Transverse colon (tissue), 4 donors: ENCODE measurements at regions of chr2 and their contacts with region 1.

Region 1: GRCh38 chr2:9333591-9334171 is 89.6 kb downstream of the ITGB1BP1 start:
- DNase-seq: peak; percentile 72
- H3K4me3 ChIP-seq: no peak overlapping the region
- H3K27ac ChIP-seq: peak overlapping the region; percentile 52 to 87 (median 84)
- H3K4me1 ChIP-seq: peaks cover 24 to 79% (median 27%) of the 10 kb centered on the region in 4 donors
- H3K27me3 ChIP-seq: no peaks in the 10 kb centered on the region
- CTCF ChIP-seq: peak; percentile 57 to 78 (median 67)
- EP300 ChIP-seq: no peak
- POLR2A ChIP-seq: no peak

Region 2: GRCh38 chr2:9205963-9206948 is 127.4 kb before region 1 on chr2 and contains the start of gene ASAP2:
- in situ Hi-C with region 1: loop called in 1 of 4 experiments (anchors 25 kb)
- intact Hi-C with region 1: loop called (anchors 5 kb)
- DNase-seq: peak; percentile 78
- H3K4me3 ChIP-seq: peak within 1 kb of the TSS; percentile 73 to 97 (median 90)
- H3K27ac ChIP-seq: peak within 1 kb of the TSS; percentile 93 to 97 (median 95)
- H3K4me1 ChIP-seq: peaks cover 0 to 41% (median 28%) of the 10 kb centered on the region in 4 donors
- H3K27me3 ChIP-seq: no peaks in the 10 kb centered on the region
- CTCF ChIP-seq: peak; percentile 78 to 88 (median 84)
- EP300 ChIP-seq: no peak
- POLR2A ChIP-seq: no peak
- total RNA-seq, gene ASAP2: 33.2 to 62.1 (median 54.5) TPM